ENCODE measurements at regions of chr19 and their contacts with region 1.

Region 1: GRCh38 chr19:3984908-3985642 is at the start of gene EEF2:
- DNase-seq: no peak
- ATAC-seq: peak; percentile 56
- H3K4me3 ChIP-seq: peak within 1 kb of the TSS; percentile 65 to 99
- H3K27ac ChIP-seq: peak within 1 kb of the TSS; percentile 83
- H3K4me1 ChIP-seq: peaks cover 8% of the 10 kb centered on the region
- H3K27me3 ChIP-seq: no peaks in the 10 kb centered on the region
- CTCF ChIP-seq: no peak
- total RNA-seq, gene EEF2: 1,391 TPM

Region 2: GRCh38 chr19:3375221-3376090 is 609.6 kb before region 1 on chr19:
- CTCF ChIA-PET with region 1: no interaction called
- POLR2A ChIA-PET with region 1: no interaction called
- in situ Hi-C with region 1: no loop called
- intact Hi-C with region 1: no loop called
- DNase-seq: no peak
- ATAC-seq: peak; percentile 82
- H3K4me3 ChIP-seq: peak overlapping the region in 1 of 2 experiments; percentile 23; a peak in 2 of 4 replicates
- H3K27ac ChIP-seq: peak overlapping the region; percentile 95
- H3K4me1 ChIP-seq: peaks cover 51% of the 10 kb centered on the region
- H3K27me3 ChIP-seq: no peaks in the 10 kb centered on the region
- CTCF ChIP-seq: no peak

Region 3: DNA sequence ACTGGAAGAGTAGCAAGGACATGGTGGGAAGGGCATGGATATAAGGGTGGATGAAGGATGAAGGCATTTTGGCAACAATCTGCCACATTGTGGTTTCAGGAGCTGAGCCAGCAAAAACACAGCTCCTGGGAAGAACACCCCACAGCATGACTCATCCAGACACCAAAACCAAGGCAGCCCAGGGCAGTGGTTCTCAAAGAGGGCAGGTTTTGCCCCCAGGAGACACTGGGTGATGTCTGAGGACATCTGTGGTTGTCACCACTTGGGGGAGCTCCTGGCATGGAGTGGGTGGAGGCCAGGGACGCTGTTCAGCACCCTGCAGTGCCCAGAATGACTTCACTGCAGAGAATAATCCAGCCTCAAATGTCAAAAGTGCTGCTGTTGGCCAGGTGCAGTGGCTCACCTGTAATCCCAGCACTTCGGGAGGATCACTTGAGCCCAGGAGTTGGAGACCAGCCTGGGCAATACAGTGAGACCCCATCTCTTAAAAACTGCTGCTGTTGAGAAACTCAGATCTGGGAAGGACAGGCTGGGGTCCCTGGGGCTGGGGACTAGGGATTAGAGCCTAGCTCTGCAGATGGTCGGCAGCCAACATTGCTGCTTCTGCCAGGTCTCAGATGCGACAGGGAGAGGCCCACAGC is 132.3 kb before region 1 on chr19:
- CTCF ChIA-PET with region 1: no interaction called
- POLR2A ChIA-PET with region 1: interaction called, 10 read pairs
- in situ Hi-C with region 1: no loop called
- intact Hi-C with region 1: no loop called
- DNase-seq: no peak
- ATAC-seq: peak; percentile 33; the same call in 1 of the 2 replicates
- H3K4me3 ChIP-seq: no peak overlapping the region
- H3K27ac ChIP-seq: no peak overlapping the region
- H3K4me1 ChIP-seq: no peaks in the 10 kb centered on the region
- H3K27me3 ChIP-seq: no peaks in the 10 kb centered on the region
- CTCF ChIP-seq: no peak

Region 4: DNA sequence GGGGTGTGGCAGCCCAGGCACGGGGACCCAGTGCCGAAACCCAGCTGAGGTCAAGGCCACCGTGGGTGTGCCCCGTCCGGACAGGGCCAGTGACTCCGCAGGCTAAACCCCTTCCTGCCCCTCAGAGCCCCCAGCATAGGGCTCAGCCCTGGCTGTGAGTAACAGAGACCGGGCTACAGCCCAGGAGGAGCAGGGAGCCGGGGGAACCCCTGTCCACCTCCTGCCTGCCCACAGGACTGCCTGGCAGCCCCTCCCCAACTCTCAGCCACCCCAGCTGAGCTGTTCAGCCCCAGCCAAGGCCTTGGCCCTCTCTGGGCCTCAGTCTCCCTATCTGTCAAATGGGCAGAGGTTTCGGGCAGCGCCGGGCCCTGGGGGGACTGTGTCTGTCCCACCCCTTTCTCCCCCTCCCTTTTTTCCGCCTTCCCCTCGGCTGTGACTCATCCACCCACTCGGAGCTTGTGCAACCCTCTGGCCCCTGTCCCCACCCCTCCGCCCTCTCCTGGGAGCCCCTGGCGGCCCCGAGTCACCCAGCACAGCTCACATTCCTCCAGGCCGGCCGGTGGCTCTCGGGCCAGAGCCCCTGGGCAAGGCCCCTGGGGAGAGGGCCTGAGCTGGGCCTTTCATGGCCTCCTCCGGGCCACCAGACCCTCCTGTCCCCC is 73.1 kb after region 1 on chr19:
- CTCF ChIA-PET with region 1: no interaction called
- POLR2A ChIA-PET with region 1: no interaction called
- in situ Hi-C with region 1: no loop called
- intact Hi-C with region 1: no loop called
- DNase-seq: no peak
- ATAC-seq: peak; percentile 59
- H3K4me3 ChIP-seq: no peak overlapping the region
- H3K27ac ChIP-seq: peak overlapping the region; percentile 77; the same call in 1 of the 2 replicates
- H3K4me1 ChIP-seq: peaks cover 40% of the 10 kb centered on the region
- H3K27me3 ChIP-seq: no peaks in the 10 kb centered on the region
- CTCF ChIP-seq: no peak

Region 5: GRCh38 chr19:4089400-4089908 is 104.4 kb after region 1 on chr19:
- CTCF ChIA-PET with region 1: interaction called, 10 read pairs
- POLR2A ChIA-PET with region 1: no interaction called
- in situ Hi-C with region 1: no loop called
- intact Hi-C with region 1: no loop called
- DNase-seq: no peak
- ATAC-seq: no peak
- H3K4me3 ChIP-seq: no peak overlapping the region
- H3K27ac ChIP-seq: no peak overlapping the region
- H3K4me1 ChIP-seq: no peaks in the 10 kb centered on the region
- H3K27me3 ChIP-seq: no peaks in the 10 kb centered on the region
- CTCF ChIP-seq: no peak

Region 6: GRCh38 chr19:4182084-4182810 is 197.2 kb after region 1 on chr19 and contains the starts of genes ANKRD24 and SIRT6:
- CTCF ChIA-PET with region 1: interaction called, 4 read pairs
- POLR2A ChIA-PET with region 1: interaction called, 15 read pairs
- in situ Hi-C with region 1: no loop called
- intact Hi-C with region 1: no loop called
- DNase-seq: peak; percentile 51
- ATAC-seq: peak; percentile 88
- H3K4me3 ChIP-seq: peak within 1 kb of the TSS; percentile 70 to 84
- H3K27ac ChIP-seq: peak within 1 kb of the TSS; percentile 83
- H3K4me1 ChIP-seq: no peaks in the 10 kb centered on the region; the same call in none of the 2 replicates
- H3K27me3 ChIP-seq: no peaks in the 10 kb centered on the region
- CTCF ChIP-seq: no peak
- total RNA-seq, gene ANKRD24: 0.26 TPM
- total RNA-seq, gene SIRT6: 19.8 TPM

Region 7: GRCh38 chr19:4208385-4209094 is 223.5 kb after region 1 on chr19:
- CTCF ChIA-PET with region 1: interaction called, 4 read pairs
- POLR2A ChIA-PET with region 1: no interaction called
- in situ Hi-C with region 1: no loop called
- intact Hi-C with region 1: loop called (anchors 10 kb)
- DNase-seq: no peak
- ATAC-seq: peak; percentile 43; the same call in 1 of the 2 replicates
- H3K4me3 ChIP-seq: no peak overlapping the region
- H3K27ac ChIP-seq: no peak overlapping the region
- H3K4me1 ChIP-seq: no peaks in the 10 kb centered on the region
- H3K27me3 ChIP-seq: no peaks in the 10 kb centered on the region
- CTCF ChIP-seq: peak; percentile 62; the same call in 1 of the 2 replicates